ENCODE measurements at regions of chr7 and their contacts with region 1.

Region 1: GRCh38 chr7:23715099-23715498 is 5.1 kb downstream of the STK31 start:
- DNase-seq: no peak
- H3K4me3 ChIP-seq: no peak overlapping the region
- CTCF ChIP-seq: no peak
- POLR2A ChIP-seq: no peak

Region 2: GRCh38 chr7:23220690-23221305 is 494.3 kb before region 1 on chr7:
- intact Hi-C with region 1: no loop called
- DNase-seq: no peak
- H3K4me3 ChIP-seq: no peak overlapping the region
- CTCF ChIP-seq: no peak
- POLR2A ChIP-seq: no peak

Region 3: DNA sequence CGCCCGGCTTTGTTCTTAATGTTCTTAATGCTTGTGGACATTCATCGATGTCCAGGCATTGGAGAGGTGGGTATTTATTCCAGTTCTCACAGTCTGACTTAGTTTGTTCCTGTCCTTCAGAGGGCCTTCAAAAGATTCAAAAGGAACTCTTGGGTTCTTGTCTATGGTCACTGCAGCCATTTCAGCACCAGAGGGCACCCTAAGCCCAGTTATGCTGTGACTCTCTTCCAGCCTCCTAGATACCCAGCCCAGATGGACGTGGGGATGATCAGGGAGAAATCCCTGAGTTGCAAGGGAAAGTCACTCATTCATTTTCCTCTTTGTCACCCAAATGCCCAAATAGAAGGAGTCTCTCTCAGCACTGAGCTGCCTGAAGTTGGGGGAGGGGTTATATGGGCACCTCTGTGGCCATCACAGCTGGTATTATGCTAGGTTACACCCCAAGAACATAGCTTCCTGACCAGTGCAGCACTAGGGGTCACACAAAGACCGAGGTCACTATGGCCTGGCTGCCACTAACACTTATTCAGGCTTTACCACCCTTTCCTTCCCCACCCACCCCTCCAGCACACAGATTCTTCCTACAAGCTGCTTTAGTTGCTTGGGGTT is 144.4 kb before region 1 on chr7:
- intact Hi-C with region 1: loop called (anchors 5 kb)
- DNase-seq: peak; percentile 54 to 92
- H3K4me3 ChIP-seq: no peak overlapping the region
- CTCF ChIP-seq: no peak
- POLR2A ChIP-seq: no peak